Gastrocnemius medialis (tissue), 4 donors: ENCODE measurements at regions of chr20 and their contacts with region 1.

Region 1: DNA sequence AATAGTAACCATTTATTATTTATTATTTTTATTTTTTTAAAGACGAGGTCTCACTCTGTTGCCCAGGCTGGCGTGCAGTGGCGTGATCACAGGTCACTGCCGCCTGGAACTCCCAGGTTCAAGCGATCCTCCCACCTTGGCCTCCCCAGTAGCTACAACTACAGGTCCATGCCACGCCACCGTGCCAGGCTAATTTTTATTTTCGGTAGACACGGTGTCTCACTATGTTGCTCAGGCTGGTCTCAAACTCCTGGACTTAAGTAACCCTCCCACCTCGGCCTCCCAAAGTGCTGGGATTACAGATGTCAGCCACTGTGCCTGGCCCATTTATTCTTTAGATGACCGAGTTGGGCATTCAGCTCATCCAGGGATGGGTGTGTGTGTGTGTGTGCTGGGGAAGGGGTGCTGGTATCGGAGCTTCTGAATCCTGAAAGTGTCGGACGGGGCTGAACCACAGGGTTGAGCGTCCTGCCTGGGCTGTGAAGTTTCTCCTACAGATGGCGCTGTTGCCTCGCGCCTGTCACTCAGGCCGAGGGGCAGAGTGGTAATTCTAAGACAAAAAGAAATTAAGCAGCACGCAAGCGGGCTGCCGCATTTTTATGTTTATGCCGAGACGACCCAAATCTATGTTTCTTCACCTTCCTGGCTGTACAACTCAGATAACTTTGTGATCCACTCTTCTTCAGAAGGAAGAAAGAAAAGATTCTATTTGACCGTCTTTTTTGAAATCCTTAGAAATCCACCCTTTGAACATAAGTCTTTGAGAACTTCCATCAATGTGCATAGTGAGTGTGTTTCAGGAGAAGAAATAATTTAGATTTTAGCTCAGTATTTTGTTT is 252.8 kb downstream of the CDH26 start:
- DNase-seq: peak in 1 of 2 donors; percentile 44
- ATAC-seq: peak; percentile 82 to 87
- H3K4me3 ChIP-seq: no peak overlapping the region
- H3K27ac ChIP-seq: no peak overlapping the region
- H3K4me1 ChIP-seq: peaks cover 0 to 4% of the 10 kb centered on the region in 2 donors
- H3K27me3 ChIP-seq: no peaks in the 10 kb centered on the region
- CTCF ChIP-seq: peak; percentile 53 to 88 (median 79)
- POLR2A ChIP-seq: no peak

Region 2: GRCh38 chr20:60062811-60063451 is 148.1 kb before region 1 on chr20:
- in situ Hi-C with region 1: no loop called
- intact Hi-C with region 1: loop called (anchors 10 kb)
- DNase-seq: peak in 1 of 2 donors; percentile 43
- ATAC-seq: peak; percentile 28 to 29
- H3K4me3 ChIP-seq: peak overlapping the region in 1 of 4 donors; percentile 11
- H3K27ac ChIP-seq: peak overlapping the region; percentile 58 to 93 (median 78)
- H3K4me1 ChIP-seq: peaks cover 52 to 58% of the 10 kb centered on the region in 2 donors
- H3K27me3 ChIP-seq: no peaks in the 10 kb centered on the region
- CTCF ChIP-seq: no peak
- POLR2A ChIP-seq: no peak

Region 3: GRCh38 chr20:60095456-60095855 is 115.5 kb before region 1 on chr20:
- in situ Hi-C with region 1: no loop called
- intact Hi-C with region 1: no loop called
- DNase-seq: no peak
- ATAC-seq: no peak
- H3K4me3 ChIP-seq: no peak overlapping the region
- H3K27ac ChIP-seq: no peak overlapping the region
- H3K4me1 ChIP-seq: no peaks in the 10 kb centered on the region
- H3K27me3 ChIP-seq: no peaks in the 10 kb centered on the region
- CTCF ChIP-seq: no peak
- POLR2A ChIP-seq: no peak

Region 4: GRCh38 chr20:60108397-60108796 is 102.6 kb before region 1 on chr20:
- in situ Hi-C with region 1: no loop called
- intact Hi-C with region 1: no loop called
- DNase-seq: no peak
- ATAC-seq: no peak
- H3K4me3 ChIP-seq: no peak overlapping the region
- H3K27ac ChIP-seq: no peak overlapping the region
- H3K4me1 ChIP-seq: peaks cover 5 to 6% of the 10 kb centered on the region in 2 donors
- H3K27me3 ChIP-seq: no peaks in the 10 kb centered on the region
- CTCF ChIP-seq: no peak
- POLR2A ChIP-seq: no peak

Region 5: GRCh38 chr20:60249436-60249835 is 38.4 kb after region 1 on chr20:
- in situ Hi-C with region 1: no loop called
- intact Hi-C with region 1: no loop called
- DNase-seq: no peak
- ATAC-seq: no peak
- H3K4me3 ChIP-seq: no peak overlapping the region
- H3K27ac ChIP-seq: no peak overlapping the region
- H3K4me1 ChIP-seq: no peaks in the 10 kb centered on the region
- H3K27me3 ChIP-seq: no peaks in the 10 kb centered on the region
- CTCF ChIP-seq: no peak
- POLR2A ChIP-seq: no peak

Region 6: GRCh38 chr20:60262967-60263603 is 52.1 kb after region 1 on chr20:
- in situ Hi-C with region 1: no loop called
- intact Hi-C with region 1: loop called (anchors 5 kb)
- DNase-seq: no peak
- ATAC-seq: no peak
- H3K4me3 ChIP-seq: no peak overlapping the region
- H3K27ac ChIP-seq: no peak overlapping the region
- H3K4me1 ChIP-seq: no peaks in the 10 kb centered on the region
- H3K27me3 ChIP-seq: no peaks in the 10 kb centered on the region
- CTCF ChIP-seq: peak in 4 of 5 experiments; percentile 23 to 60 (median 53)
- POLR2A ChIP-seq: no peak

Region 7: GRCh38 chr20:60274717-60275116 is 63.7 kb after region 1 on chr20:
- in situ Hi-C with region 1: no loop called
- intact Hi-C with region 1: no loop called
- DNase-seq: no peak
- ATAC-seq: no peak
- H3K4me3 ChIP-seq: no peak overlapping the region
- H3K27ac ChIP-seq: no peak overlapping the region
- H3K4me1 ChIP-seq: no peaks in the 10 kb centered on the region
- H3K27me3 ChIP-seq: no peaks in the 10 kb centered on the region
- CTCF ChIP-seq: no peak
- POLR2A ChIP-seq: no peak

Region 8: DNA sequence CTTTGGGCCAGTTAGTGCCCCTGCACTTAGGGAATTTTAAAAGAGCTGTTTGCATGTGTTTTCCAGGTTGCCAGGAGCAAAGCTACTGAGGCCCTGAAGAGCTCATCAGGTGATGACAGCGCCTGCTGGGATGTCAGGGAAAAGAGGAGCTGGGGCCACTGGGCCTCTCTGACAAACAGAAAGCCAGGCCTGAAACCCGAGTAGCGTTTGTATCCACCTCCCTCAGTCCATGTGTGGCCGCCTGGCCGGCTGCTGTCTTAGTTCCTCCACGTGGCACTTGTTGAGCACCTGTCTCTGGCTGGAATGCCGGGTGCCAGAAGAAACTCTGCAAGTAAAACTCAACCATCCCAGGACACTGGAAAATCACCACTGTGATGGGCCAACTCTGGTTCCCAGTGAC is 348.5 kb after region 1 on chr20:
- in situ Hi-C with region 1: loop called in 1 of 4 experiments (anchors 25 kb)
- intact Hi-C with region 1: no loop called
- DNase-seq: no peak
- ATAC-seq: no peak
- H3K4me3 ChIP-seq: no peak overlapping the region
- H3K27ac ChIP-seq: no peak overlapping the region
- H3K4me1 ChIP-seq: no peaks in the 10 kb centered on the region
- H3K27me3 ChIP-seq: no peaks in the 10 kb centered on the region
- CTCF ChIP-seq: no peak
- POLR2A ChIP-seq: no peak

Region 9: DNA sequence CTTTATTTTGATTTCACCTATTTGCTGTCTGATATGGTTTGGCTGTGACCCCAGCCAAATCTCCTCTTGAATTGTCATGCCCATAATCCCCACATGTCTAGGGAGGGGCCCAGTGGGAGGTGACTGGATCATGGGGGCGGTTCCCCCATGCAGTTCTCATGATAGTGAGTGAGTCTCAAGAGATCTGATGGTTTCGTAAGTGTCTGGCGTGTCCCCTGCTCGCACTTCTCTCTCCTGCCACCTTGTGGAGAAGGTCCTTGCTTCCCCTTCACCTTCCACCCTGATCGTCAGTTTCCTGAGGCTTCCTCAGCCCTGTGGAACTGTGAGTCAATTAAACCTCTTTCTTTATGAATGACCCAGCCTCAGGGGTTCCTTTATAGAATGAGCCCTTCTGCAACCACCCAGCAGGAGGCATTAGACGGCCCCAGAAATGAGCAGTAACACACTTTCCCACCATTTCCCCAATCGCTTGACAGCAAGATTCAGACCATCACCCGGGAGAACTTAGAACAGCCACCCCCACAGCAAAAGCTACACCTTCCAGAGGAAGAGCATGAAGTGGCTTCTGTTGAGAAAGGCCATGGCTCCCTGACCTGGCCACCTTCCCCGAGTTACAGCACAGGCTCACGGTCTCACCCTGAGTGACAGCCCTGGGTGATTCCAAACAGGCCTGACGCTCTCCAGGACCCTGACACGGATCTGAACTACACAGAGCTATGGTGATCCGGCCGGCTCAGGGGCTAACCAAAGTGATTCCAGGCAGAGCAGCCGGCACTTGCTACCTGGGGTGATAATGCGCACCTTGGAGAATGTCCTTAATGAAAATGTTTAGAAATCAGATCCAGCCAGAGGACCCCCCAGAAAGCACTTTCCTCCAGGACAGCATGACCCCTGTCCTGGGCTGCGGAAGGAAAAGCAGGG is 909.9 kb after region 1 on chr20:
- in situ Hi-C with region 1: loop called in 1 of 4 experiments (anchors 10 kb)
- intact Hi-C with region 1: loop called (anchors 2 kb)
- DNase-seq: peak; percentile 14 to 41
- ATAC-seq: peak; percentile 53 to 68
- H3K4me3 ChIP-seq: no peak overlapping the region
- H3K27ac ChIP-seq: no peak overlapping the region
- H3K4me1 ChIP-seq: no peaks in the 10 kb centered on the region
- H3K27me3 ChIP-seq: peaks cover 0 to 4% (median 2%) of the 10 kb centered on the region in 3 donors
- CTCF ChIP-seq: peak in 2 of 5 experiments; percentile 28 to 43
- POLR2A ChIP-seq: no peak

Region 10: GRCh38 chr20:61234803-61235113 is 1023.8 kb after region 1 on chr20:
- in situ Hi-C with region 1: loop called in 1 of 4 experiments (anchors 25 kb)
- intact Hi-C with region 1: no loop called
- DNase-seq: no peak
- ATAC-seq: no peak
- H3K4me3 ChIP-seq: no peak overlapping the region
- H3K27ac ChIP-seq: no peak overlapping the region
- H3K4me1 ChIP-seq: no peaks in the 10 kb centered on the region
- H3K27me3 ChIP-seq: no peaks in the 10 kb centered on the region
- CTCF ChIP-seq: no peak
- POLR2A ChIP-seq: no peak

Region 11: DNA sequence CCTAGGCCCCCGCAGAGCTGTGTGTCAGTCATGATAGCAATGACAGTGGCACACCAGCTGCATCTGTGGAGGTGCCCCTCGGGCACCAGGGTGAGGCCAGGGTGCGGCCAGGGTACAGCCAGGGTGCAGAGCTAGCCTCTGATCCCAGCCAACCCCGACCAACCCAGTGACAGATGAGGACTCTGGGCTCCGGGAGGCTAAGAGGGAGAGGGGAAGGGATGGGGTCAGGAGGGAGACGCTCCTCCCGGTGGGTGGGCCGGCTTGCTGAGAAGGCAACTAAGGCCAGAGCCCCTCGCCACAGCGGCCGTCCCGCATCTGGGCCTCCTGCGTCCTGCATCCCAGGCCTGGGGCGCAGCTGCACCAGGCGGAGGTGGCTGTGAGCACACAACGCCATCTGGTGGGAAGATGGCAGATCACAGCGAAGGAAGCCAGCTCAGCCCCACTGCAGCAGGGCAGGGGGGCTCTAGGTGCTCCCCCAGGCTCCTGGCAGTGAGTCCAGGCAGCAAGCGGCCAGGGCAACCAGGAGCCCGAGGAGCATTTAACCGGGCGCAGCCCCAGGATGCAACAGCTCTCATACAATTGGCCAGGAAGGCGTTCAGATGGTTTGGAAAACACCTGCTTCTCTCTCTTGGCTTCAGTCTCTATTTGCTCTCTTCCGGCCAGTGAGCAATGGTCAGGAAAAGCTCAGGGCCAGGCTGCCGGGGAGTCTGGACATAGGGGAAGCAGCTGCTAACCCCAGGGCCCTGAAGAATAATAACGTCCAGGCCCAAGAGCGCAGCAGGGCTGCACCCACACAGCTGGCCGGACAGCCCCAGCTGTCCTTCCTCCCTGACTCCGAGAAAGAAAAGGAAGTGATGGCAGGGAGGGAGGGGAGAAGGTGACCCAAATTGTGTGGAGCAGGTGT is 1685.3 kb after region 1 on chr20:
- in situ Hi-C with region 1: loop called in 1 of 4 experiments (anchors 25 kb)
- intact Hi-C with region 1: no loop called
- DNase-seq: no peak
- ATAC-seq: no peak
- H3K4me3 ChIP-seq: no peak overlapping the region
- H3K27ac ChIP-seq: no peak overlapping the region
- H3K4me1 ChIP-seq: no peaks in the 10 kb centered on the region
- H3K27me3 ChIP-seq: peaks cover 0 to 12% (median 12%) of the 10 kb centered on the region in 3 donors
- CTCF ChIP-seq: peak in 4 of 5 experiments; percentile 11 to 65 (median 49)
- POLR2A ChIP-seq: no peak